ENCODE measurements at regions of chr1 and their contacts with region 1.

Region 1: DNA sequence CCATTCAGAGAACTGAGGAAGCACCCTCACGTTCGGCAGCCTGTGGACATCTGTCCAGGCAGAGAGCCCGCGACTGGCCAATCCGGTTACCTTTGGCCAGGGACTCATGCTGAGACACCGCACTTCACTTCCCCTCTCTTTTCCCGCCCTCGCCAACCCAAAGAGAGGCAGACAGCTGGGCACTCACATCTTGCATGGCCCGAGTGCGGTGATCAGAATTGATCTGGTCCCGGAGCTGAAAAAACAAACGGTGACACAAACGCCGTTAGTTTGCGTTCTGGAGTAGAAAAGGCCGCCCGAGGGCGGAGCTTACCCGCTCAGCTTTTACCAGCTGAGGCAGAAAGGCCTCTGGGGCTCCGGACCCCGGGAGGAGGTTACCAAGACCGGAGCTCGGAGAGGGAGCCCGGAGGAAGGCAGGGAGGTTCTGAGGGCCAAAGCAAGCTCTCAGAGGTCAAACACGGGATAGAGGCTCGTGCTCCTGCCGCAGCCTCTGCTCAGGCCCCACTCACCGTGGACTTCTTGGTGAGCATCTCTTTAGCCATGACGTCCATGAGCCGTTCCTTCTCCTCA is 376 bp downstream of the SF3A3 start:
- DNase-seq: no peak

Region 2: DNA sequence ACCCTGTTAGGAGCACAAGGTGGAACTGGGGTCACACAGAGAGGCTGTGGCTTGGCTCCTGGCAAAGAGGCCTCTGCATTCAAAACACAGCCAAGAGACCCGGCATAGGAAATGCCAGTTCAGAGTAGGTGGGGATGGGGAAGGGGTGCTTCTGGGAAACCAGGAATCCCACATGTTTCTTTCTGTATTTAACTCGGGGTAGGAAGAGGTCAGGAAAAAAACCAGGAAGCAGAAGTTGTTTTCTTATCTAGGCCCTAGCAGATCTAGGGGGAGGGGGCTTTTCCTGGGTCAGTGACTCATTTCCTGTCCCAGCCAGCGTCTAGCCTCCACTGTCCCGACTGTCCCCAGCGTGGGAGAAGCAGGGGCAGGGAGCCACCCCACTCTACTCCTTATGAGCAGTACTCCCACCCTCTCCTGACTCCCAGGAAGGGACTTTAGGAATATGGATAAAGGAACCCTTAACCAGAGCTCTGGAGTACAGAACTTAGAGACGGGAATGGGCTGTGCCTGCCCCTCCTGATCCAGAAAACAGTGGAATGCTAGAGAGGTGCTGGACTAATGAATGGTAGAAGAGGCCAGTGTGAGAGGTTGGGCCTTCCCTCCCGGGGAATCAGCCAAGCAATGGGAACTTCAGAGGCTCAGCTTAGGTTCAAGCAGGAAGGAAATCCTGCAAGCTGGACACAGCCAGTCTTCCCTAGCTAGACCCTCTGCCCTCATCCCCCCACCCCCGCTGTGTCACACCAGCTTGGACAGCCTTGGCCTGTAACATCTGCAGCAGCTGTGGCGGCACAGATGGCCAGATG is 10.2 kb after region 1 on chr1:
- CTCF ChIA-PET with region 1: interaction called, 4 read pairs
- POLR2A ChIA-PET with region 1: interaction called, 21 read pairs
- DNase-seq: no peak

Region 3: GRCh38 chr1:38012363-38013226 is 23.1 kb after region 1 on chr1 and contains the start of gene UTP11:
- CTCF ChIA-PET with region 1: interaction called, 3 read pairs
- POLR2A ChIA-PET with region 1: interaction called, 19 read pairs
- DNase-seq: peak; percentile 93